ENCODE measurements at regions of chr9 and their contacts with region 1.

Region 1: GRCh38 chr9:33374634-33375213 is 27.6 kb downstream of the AQP7 start:
- DNase-seq: peak; percentile 32 to 72 (median 45)
- H3K4me3 ChIP-seq: no peak overlapping the region
- H3K4me3 Mint-ChIP-seq: no peak overlapping the region
- H3K27ac ChIP-seq: no peak overlapping the region
- H3K27ac Mint-ChIP-seq: peak overlapping the region in 2 of 8 donors; percentile 39 to 79
- H3K4me1 ChIP-seq: no peaks in the 10 kb centered on the region
- H3K4me1 Mint-ChIP-seq: peaks cover 5 to 7% (median 7%) of the 10 kb centered on the region in 3 donors
- H3K27me3 ChIP-seq: no peaks in the 10 kb centered on the region
- H3K27me3 Mint-ChIP-seq: peaks cover 0 to 2% of the 10 kb centered on the region in 2 donors

Region 2: GRCh38 chr9:33139421-33140228 is 235.1 kb before region 1 on chr9:
- CTCF ChIA-PET with region 1: no interaction called
- POLR2A ChIA-PET with region 1: no interaction called
- DNase-seq: no peak
- H3K4me3 ChIP-seq: no peak overlapping the region
- H3K4me3 Mint-ChIP-seq: peak overlapping the region; percentile 62 to 89 (median 72)
- H3K27ac ChIP-seq: no peak overlapping the region
- H3K27ac Mint-ChIP-seq: peak overlapping the region; percentile 84 to 99 (median 95)
- H3K4me1 ChIP-seq: peaks cover 95% of the 10 kb centered on the region
- H3K4me1 Mint-ChIP-seq: peaks cover 94 to 97% (median 97%) of the 10 kb centered on the region in 3 donors
- H3K27me3 ChIP-seq: no peaks in the 10 kb centered on the region
- H3K27me3 Mint-ChIP-seq: peaks cover 0 to 1% of the 10 kb centered on the region in 2 donors

Region 3: GRCh38 chr9:33364127-33364526 is 10.6 kb before region 1 on chr9:
- CTCF ChIA-PET with region 1: interaction called, 15 read pairs
- POLR2A ChIA-PET with region 1: no interaction called
- DNase-seq: no peak
- H3K4me3 ChIP-seq: no peak overlapping the region
- H3K4me3 Mint-ChIP-seq: no peak overlapping the region
- H3K27ac ChIP-seq: no peak overlapping the region
- H3K27ac Mint-ChIP-seq: peak overlapping the region in 4 of 8 donors; percentile 13 to 61 (median 28)
- H3K4me1 ChIP-seq: no peaks in the 10 kb centered on the region
- H3K4me1 Mint-ChIP-seq: no peaks in the 10 kb centered on the region
- H3K27me3 ChIP-seq: no peaks in the 10 kb centered on the region
- H3K27me3 Mint-ChIP-seq: no peaks in the 10 kb centered on the region

Measured in CD8-positive, alpha-beta memory T cell (primary cell).